Activated T-helper 1 cell treated with anti-CD3 and anti-CD28 coated beads, Interleukin-12 subunit alpha, Interleukin-12 subunit beta, Interleukin-2, Interleukin-4 antibody, amounts not matched to agents 30 ng/mL and 10 ng/mL and 1 ng/mL, durations not matched to agents 14 hours and 24 hours and 36 hours (primary cell): ENCODE measurements at regions of chrX and their contacts with region 1.

Region 1: GRCh38 chrX:72181178-72182125 is at the start of gene PIN4:
- DNase-seq: peak; percentile 76
- H3K4me3 Mint-ChIP-seq: no peak within 1 kb of the TSS
- H3K27ac Mint-ChIP-seq: no peak within 1 kb of the TSS
- H3K4me1 Mint-ChIP-seq: peaks cover 16% of the 10 kb centered on the region
- H3K27me3 Mint-ChIP-seq: no peaks in the 10 kb centered on the region
- total RNA-seq, gene PIN4: 10.2 and 13.3 TPM in 2 replicates

Region 2: DNA sequence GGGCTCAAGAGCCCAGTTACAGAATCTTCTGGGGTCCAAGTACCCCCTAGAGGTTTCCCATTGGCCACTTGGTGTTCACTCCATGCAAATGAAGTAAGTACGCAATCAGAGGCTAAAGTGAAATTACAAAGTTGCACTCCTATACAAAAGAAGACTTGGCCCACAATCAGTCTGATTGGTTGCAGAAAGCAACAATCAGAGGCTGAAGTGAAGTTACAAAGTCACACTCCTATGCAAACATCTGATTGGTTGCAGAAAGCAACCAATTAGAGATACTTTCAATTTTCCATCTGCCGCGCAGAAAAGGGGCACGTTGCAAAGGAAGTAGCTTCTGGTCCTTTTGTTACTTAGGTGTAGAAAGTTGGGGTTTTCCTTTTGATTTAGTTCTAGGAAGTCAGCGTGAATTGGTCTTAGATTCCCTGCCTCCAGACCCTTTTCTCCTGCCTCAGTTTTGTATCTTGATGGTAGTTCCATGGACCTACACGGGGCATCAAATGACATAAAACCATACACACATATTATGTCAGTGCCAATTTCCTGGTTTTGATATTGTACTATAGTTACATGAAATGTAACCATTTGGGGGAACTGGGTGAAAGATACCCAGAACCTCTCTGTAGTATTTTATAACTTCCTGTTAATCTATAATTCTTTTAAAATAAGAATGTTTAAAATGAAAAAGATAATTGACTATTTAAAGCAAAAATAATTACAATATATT is 12.3 kb before region 1 on chrX:
- intact Hi-C with region 1: loop called (anchors 1 kb)
- DNase-seq: peak; percentile 6
- H3K4me3 Mint-ChIP-seq: peak overlapping the region; percentile 56
- H3K27ac Mint-ChIP-seq: peak overlapping the region; percentile 79
- H3K4me1 Mint-ChIP-seq: peaks cover 11% of the 10 kb centered on the region
- H3K27me3 Mint-ChIP-seq: no peaks in the 10 kb centered on the region

Region 3: GRCh38 chrX:72201836-72202536 is 20.5 kb after region 1 on chrX:
- intact Hi-C with region 1: no loop called
- DNase-seq: no peak
- H3K4me3 Mint-ChIP-seq: no peak overlapping the region
- H3K27ac Mint-ChIP-seq: no peak overlapping the region
- H3K4me1 Mint-ChIP-seq: no peaks in the 10 kb centered on the region
- H3K27me3 Mint-ChIP-seq: no peaks in the 10 kb centered on the region

Region 4: DNA sequence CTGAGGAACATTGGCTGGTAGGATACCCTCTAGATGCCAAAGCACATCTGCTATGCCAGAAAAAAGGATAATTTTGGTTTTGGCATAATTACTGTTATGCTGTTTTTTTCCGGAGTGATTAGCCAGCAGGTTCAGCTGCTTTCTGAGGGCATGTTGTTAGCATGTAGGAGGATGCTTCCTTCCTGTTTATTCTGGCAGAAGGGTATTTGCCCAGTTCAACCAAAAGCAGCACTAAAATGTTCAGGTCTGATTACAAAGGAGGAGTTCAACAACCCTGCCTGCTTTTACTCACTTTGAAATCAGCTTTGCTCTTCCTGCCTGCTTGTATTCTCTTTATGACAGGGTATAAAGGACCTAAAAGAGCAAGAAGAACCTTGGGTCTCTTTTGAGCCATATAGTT is 35.5 kb after region 1 on chrX:
- intact Hi-C with region 1: no loop called
- DNase-seq: no peak
- H3K4me3 Mint-ChIP-seq: no peak overlapping the region
- H3K27ac Mint-ChIP-seq: no peak overlapping the region
- H3K4me1 Mint-ChIP-seq: no peaks in the 10 kb centered on the region
- H3K27me3 Mint-ChIP-seq: no peaks in the 10 kb centered on the region

Region 5: DNA sequence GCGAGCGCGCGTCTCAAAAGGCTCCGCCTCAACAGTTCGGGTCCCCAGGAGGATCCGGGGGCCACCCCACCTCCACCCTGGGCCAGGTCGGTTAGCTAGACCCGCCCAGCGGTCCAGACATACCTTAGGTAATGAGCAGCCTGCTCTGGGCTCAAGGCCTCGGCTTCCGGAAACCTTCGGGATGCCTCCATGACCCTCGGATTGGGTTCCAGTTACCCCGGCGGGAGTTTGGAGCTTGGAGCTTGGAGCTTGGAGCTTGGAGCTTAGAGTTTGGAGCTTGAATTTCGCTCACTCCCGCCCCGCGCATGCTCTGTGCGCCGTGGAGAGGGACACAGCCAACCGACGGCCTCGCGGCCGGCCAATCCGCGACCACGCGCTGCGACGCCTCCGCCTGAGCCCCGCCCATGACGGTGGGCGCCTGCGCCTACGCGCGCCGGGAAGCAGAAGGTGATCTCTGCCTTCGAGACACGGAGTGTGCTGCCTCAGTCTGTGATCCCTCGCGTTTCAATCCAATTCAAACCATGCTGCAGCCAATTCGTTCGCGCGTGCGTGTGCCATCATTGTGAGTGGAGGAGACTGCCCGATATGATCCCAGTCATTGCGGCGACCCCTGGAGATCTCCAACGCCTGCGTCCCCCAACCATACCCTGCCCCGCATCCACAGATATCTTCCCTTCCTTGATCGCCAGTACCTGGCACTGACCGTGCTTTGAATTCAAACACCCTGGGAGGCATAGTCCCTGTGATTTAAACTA is 57.4 kb after region 1 on chrX and contains the start of gene ERCC6L:
- intact Hi-C with region 1: loop called (anchors 1 kb)
- DNase-seq: peak; percentile 84
- H3K4me3 Mint-ChIP-seq: peak within 1 kb of the TSS; percentile 84
- H3K27ac Mint-ChIP-seq: peak within 1 kb of the TSS; percentile 67
- H3K4me1 Mint-ChIP-seq: peaks cover 9% of the 10 kb centered on the region
- H3K27me3 Mint-ChIP-seq: no peaks in the 10 kb centered on the region
- total RNA-seq, gene ERCC6L: 7.4 and 7.5 TPM in 2 replicates

Region 6: DNA sequence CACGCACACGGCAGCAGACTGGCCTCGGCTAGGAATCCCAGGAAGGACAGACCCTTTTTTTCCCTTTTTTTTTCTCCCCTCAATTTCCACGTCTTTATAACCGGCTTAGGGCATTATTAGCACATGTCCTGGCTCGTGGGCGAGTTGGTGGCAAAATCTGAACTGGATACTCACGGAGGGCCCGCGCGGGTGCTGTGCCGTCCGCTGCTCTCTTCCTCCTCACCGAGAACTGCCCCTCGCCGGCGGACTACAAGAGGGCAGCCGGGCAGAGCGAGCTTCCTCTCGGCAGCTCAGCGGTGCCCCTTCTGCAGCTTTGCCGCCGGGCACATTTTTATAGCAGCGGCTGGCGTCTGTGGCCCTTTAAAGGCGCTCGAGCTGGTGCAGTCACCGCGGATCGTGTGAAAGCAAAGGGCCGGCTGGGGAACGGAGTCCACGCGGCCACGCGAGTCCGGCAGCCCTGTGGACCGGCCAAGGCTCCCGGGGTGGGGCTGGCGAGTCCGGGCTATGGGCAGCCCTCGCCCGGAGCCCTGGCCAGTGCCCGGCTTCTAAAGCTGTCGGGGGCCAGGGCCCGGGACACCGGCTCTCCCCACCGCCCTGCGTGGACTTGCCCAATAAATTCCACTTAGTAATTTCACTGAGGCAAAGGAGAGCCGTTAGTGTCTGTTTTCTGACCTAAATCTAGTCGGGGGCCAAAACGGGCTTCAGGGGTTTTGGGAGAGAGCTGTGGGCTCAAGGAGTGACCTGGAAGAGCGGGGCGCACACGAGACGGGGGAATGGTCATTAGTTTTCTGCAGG is 125.6 kb after region 1 on chrX:
- intact Hi-C with region 1: no loop called
- DNase-seq: no peak
- H3K4me3 Mint-ChIP-seq: peak overlapping the region; percentile 83
- H3K27ac Mint-ChIP-seq: peak overlapping the region; percentile 44
- H3K4me1 Mint-ChIP-seq: peaks cover 24% of the 10 kb centered on the region
- H3K27me3 Mint-ChIP-seq: peaks cover 57% of the 10 kb centered on the region

Region 7: DNA sequence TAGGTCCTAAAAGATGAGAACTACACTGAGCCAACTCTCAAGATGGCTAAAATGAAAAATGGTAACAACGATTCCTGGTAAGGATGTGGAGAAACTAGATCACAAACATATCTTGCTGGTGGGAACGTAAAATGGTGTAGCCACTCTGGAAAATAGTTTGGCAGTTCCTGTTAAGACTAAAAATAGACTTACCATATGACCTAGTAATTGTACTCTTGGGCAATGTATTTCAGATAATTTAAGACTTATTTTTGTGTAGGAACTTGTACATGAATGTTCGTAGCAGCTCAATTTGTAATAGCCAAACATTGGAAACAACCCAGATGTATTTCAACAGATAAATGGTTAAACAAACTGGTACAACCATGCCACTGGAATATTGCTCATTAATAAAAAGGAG is 285.0 kb after region 1 on chrX:
- intact Hi-C with region 1: no loop called
- DNase-seq: no peak
- H3K4me3 Mint-ChIP-seq: no peak overlapping the region
- H3K27ac Mint-ChIP-seq: no peak overlapping the region
- H3K4me1 Mint-ChIP-seq: no peaks in the 10 kb centered on the region
- H3K27me3 Mint-ChIP-seq: no peaks in the 10 kb centered on the region

Region 8: DNA sequence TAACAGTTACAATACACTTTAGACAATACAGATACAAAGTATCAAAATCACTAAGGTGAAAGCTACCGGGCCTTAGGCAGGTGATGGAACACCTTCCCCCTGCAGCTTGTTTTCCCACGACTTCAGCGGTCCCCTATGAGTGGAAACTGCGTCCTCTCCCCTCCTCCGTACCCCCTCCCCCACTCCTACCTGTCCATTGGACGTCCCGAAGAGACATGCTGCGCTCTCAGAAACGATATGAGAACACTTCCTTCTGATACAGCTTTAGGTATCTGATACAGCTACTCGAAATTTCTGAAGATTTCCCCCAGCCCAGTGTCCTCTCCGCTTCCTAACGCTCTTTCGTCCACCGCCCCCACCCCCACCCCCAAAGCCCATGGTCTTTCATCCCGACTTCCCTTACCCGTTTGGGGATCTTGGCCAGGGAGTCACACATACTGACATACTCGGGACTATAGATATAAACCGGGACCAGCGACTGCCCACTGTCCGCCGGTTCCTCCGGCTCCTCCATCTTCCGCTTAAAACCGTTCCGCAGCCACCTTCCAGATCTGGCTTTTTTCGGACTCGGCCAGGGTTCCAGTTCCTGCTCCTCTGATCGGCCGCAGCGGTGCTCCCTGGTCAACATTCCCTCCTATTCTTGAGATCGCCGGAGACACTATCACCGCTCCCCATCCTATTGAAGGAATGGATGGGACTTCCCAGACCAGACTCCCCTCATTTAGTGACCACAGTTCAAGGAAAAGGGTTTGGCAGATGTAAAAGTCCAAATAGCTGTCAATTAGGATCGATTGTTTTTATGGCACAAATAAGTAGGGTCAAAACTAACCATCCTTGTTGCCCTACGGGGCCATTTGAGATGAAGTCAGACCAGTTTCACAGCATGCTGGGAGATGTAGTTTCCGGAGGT is 391.1 kb after region 1 on chrX and contains the start of gene HDAC8:
- intact Hi-C with region 1: loop called (anchors 2 kb)
- DNase-seq: peak; percentile 26
- H3K4me3 Mint-ChIP-seq: peak within 1 kb of the TSS; percentile 98
- H3K27ac Mint-ChIP-seq: peak within 1 kb of the TSS; percentile 95
- H3K4me1 Mint-ChIP-seq: peaks cover 5% of the 10 kb centered on the region
- H3K27me3 Mint-ChIP-seq: peaks cover 2% of the 10 kb centered on the region
- total RNA-seq, gene HDAC8: 29.6 and 30.6 TPM in 2 replicates